PC-9 (cell line): ENCODE measurements at regions of chr11 and their contacts with region 1.

Region 1: DNA sequence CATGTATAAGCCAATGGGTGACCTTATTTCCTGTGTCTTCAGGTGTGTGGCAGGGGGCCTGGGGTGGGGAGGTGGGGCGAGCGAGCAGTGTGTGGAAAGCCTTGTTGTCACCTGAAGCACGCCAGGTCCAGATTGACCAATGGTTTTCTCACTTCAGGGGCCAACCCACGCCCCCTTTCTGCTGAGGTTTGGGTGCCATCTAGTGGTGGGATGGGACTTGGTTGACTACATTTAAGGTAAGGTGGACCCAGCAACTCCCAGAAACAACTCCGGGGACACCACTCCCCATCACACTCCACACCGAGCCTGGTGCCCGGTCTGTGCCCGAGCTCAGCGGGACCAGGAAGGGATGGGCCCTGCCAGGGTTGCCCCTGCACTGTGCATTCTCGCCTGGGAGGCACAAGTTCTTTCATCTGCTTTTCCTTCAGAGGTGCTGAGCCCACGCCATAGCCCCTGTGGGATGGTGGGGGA is 40.0 kb downstream of the TPCN2 start:
- DNase-seq: peak; percentile 80 to 86
- H3K4me3 ChIP-seq: no peak overlapping the region
- H3K27ac ChIP-seq: no peak overlapping the region
- H3K4me1 ChIP-seq: peaks cover 8% of the 10 kb centered on the region
- H3K27me3 ChIP-seq: no peaks in the 10 kb centered on the region
- CTCF ChIP-seq: peak; percentile 90

Region 2: DNA sequence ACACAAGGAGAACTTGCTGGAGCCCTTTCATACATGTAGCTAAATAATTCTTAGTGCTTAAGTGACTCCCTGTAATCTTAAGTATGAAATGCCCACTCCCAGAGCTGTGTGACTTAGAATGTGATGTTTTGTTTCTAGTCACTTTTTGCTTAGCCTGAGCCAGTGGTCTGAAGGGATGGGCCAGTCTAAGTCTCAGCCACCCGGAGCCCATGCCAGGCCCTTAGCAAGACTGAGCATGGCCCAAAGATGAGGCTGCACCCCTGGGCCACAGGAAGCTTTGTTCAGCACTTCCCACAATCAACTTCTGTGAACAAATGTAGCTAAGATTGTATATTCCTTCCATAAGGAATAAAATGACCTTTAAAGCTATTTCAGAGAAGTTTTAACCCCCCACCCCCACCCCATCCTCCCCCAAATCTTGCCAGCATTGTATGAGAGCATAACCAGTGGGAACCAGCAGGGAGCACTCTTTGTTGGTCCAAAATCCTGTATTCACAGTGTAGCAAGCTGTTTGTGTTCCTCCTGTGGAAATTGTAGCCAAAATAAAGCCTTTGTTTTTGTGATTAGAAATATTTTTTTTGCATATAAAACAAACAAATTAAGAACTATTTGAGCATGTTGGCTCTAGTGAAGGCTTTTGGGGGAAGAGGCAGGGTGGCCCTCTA is 478.1 kb before region 1 on chr11:
- CTCF ChIA-PET with region 1: no interaction called
- POLR2A ChIA-PET with region 1: no interaction called
- intact Hi-C with region 1: loop called (anchors 5 kb)
- DNase-seq: no peak
- H3K4me3 ChIP-seq: no peak overlapping the region
- H3K27ac ChIP-seq: no peak overlapping the region
- H3K4me1 ChIP-seq: no peaks in the 10 kb centered on the region
- H3K27me3 ChIP-seq: no peaks in the 10 kb centered on the region
- CTCF ChIP-seq: peak; percentile 45; the same call in 1 of the 2 replicates

Region 3: DNA sequence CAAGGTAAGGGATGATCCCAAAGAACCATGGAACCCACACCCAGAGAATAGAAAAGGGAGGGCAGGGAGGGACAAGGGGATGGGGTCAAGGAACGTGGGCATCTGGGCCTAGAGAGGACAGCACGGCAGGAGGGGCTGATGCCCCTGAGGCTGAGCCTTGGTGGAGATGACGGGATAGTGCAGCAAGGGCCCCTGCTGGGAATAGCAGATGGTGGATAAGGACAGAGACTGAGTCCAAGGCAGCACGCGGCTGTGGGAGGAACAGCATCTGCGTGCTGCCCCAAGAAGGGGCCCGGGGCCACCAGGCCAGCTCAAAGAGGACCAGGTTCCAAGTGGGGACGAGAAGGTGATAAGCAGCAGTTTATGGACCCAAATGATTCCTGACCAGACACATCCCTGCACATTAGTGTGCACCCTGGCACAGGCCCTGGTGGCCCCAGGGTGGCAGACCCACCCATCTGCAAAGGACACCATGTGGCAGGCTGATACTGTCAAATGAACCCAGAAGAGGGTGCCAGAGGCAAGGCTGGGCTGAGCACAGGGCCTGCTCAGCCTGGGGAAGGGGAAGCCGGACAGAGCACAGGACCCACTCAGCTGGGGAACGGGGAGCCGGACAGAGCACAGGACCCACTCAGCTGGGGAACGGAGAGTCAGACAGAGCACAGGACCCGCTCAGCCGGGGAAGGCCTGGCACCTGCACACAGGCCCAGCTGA is 324.6 kb before region 1 on chr11:
- CTCF ChIA-PET with region 1: no interaction called
- POLR2A ChIA-PET with region 1: no interaction called
- intact Hi-C with region 1: loop called (anchors 5 kb)
- DNase-seq: no peak
- H3K4me3 ChIP-seq: no peak overlapping the region
- H3K27ac ChIP-seq: peak overlapping the region; percentile 88
- H3K4me1 ChIP-seq: peaks cover 23% of the 10 kb centered on the region
- H3K27me3 ChIP-seq: no peaks in the 10 kb centered on the region
- CTCF ChIP-seq: 0 out of 2 replicates have a peak, but pooled peaks have one; percentile 38

Region 4: DNA sequence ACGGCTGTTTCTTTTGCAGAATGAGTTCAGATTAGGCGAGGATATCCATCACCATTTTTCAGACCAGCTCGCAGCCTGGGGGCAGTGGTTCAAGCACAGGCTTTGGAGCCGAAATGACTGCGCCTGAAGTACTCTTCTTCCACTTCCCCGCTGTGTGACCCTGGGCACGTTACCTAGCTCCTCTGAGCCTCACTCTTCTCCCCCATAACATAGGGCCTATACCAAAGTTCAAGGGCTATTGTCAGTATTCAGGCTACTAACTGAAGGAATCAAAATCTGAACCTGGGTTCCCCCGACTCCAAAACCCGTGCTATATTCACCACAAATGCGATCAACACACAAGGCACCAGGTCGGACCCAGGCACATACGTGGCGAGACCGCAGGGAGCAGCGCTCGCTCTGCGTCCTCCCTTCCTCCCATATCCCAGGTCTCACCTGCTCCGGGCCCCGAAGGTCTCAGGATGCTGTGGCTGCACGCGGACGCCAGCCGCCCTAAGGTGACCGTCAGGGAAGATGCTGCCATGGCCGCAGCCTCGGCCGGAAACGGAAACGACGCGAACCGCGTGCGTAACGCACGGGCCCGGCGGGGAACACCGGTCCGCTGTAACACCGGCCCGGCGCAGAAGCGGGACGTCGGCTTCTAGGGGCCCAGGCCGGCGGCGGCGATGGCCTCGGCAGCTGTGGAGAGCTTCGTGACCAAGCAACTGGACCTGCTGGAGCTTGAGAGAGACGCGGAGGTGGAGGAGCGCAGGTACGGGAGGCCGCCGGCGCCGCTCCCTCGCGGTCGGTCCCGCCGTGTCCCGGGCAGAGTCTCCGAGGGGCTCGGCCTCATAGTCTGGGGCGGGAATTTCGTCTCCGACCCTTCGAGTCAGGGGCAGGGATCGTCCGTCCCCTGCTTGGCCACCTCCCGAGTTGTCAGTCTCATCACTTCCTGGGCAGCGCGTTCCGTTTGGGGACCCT is 185.1 kb before region 1 on chr11 and contains the starts of genes IGHMBP2 and MRPL21:
- CTCF ChIA-PET with region 1: no interaction called
- POLR2A ChIA-PET with region 1: no interaction called
- intact Hi-C with region 1: loop called (anchors 5 kb)
- DNase-seq: peak; percentile 70 to 86
- H3K4me3 ChIP-seq: peak within 1 kb of the TSS; percentile 99
- H3K27ac ChIP-seq: peak within 1 kb of the TSS; percentile 36
- H3K4me1 ChIP-seq: peaks cover 24% of the 10 kb centered on the region
- H3K27me3 ChIP-seq: no peaks in the 10 kb centered on the region
- CTCF ChIP-seq: no peak
- total RNA-seq, gene IGHMBP2: 27.0 and 27.6 TPM in 2 replicates
- total RNA-seq, gene MRPL21: 81.9 and 88.0 TPM in 2 replicates

Region 5: DNA sequence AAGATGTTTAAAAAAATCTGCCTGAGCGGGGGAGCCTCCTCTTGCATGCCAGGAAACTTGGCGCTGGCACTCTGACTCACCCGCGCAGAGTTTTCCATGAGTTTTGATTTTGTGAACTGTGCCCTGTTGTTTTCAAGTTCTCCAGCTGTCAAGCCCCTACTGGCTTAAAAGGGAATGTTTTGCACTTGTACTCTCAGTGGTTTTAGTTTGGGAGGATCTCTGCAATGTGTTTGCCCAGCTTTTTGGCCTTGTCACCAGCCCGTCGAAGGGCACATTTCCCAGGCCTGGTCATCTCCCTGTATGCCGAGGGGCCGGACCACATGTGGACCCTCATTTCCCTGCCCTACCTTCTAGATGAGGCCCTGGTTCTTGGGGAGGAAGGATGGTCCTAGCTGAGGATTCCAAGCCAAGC is 87.9 kb before region 1 on chr11:
- CTCF ChIA-PET with region 1: no interaction called
- POLR2A ChIA-PET with region 1: no interaction called
- intact Hi-C with region 1: loop called (anchors 10 kb)
- DNase-seq: peak; percentile 43 to 57
- H3K4me3 ChIP-seq: no peak overlapping the region
- H3K27ac ChIP-seq: no peak overlapping the region
- H3K4me1 ChIP-seq: no peaks in the 10 kb centered on the region
- H3K27me3 ChIP-seq: peaks cover 34% of the 10 kb centered on the region
- CTCF ChIP-seq: peak; percentile 64